ENCODE measurements at regions of chr1 and their contacts with region 1.

Region 1: DNA sequence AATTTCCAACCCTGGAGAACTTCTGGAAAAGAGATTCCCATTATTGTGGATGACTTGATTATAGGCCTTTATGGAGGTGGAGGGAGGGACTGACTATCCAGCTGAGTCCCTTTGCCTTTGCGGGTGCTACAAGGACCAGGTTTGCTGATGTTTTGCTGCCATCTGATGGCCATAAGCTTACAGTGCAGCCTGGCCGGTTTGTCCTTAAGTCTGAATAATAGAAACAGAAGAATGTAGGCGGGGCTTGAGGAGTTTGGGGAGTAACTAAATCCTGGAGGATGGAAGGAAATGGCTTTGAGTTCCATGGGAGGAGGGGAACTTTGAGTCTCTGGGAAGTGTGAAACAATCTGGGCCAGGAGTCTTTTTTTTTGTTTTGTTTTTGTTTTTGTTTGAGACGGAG is 55.7 kb upstream of the CD1D start:
- DNase-seq: peak; percentile 78 to 92
- H3K4me3 ChIP-seq: no peak overlapping the region
- H3K27ac ChIP-seq: no peak overlapping the region
- H3K4me1 ChIP-seq: no peaks in the 10 kb centered on the region
- H3K27me3 ChIP-seq: no peaks in the 10 kb centered on the region
- CTCF ChIP-seq: peak; percentile 86 to 97 (median 93)
- POLR2A ChIP-seq: no peak

Region 2: GRCh38 chr1:157963713-157964112 is 161.3 kb before region 1 on chr1:
- intact Hi-C with region 1: loop called (anchors 10 kb)
- DNase-seq: no peak
- H3K4me3 ChIP-seq: no peak overlapping the region
- H3K27ac ChIP-seq: no peak overlapping the region
- H3K4me1 ChIP-seq: no peaks in the 10 kb centered on the region
- H3K27me3 ChIP-seq: peaks cover 0 to 8% of the 10 kb centered on the region in 2 donors
- CTCF ChIP-seq: peak; percentile 78 to 83 (median 82)
- POLR2A ChIP-seq: no peak

Region 3: DNA sequence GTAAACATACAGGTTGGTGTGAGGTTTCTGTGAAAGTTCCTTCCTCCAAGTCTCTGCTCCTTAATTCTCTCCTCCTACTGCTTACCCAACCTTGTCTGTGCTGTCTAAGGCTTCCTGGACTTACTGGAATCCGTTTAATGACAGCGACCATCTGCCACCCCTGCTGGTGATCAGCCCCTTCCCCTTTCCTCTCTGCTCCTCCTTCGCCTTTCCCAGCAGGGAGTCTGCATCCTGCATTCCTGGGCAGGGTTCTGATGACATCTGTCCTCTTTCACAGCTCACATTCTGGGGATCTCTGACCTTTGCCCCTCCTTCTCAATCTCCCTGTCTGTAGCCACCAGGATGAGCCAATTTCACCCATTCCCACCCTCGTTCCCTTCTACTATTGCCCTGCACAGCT is 65.0 kb before region 1 on chr1:
- intact Hi-C with region 1: no loop called
- DNase-seq: no peak
- H3K4me3 ChIP-seq: no peak overlapping the region
- H3K27ac ChIP-seq: no peak overlapping the region
- H3K4me1 ChIP-seq: no peaks in the 10 kb centered on the region
- H3K27me3 ChIP-seq: no peaks in the 10 kb centered on the region
- CTCF ChIP-seq: no peak
- POLR2A ChIP-seq: no peak

Measured in breast epithelium (tissue), 4 donors.